CD8-positive, alpha-beta T cell (primary cell): ENCODE measurements at regions of chr16 and their contacts with region 1.

Region 1: GRCh38 chr16:87765776-87766484 is at the start of gene KLHDC4:
- DNase-seq: peak; percentile 78 to 94 (median 89)
- ATAC-seq: peak; percentile 43
- H3K4me3 ChIP-seq: peak within 1 kb of the TSS; percentile 86 to 89
- H3K4me3 Mint-ChIP-seq: peak within 1 kb of the TSS; percentile 98
- H3K27ac ChIP-seq: peak within 1 kb of the TSS; percentile 88 to 95
- H3K27ac Mint-ChIP-seq: peak within 1 kb of the TSS; percentile 99
- H3K4me1 ChIP-seq: peaks cover 45% of the 10 kb centered on the region
- H3K4me1 Mint-ChIP-seq: peaks cover 42% of the 10 kb centered on the region
- H3K27me3 ChIP-seq: no peaks in the 10 kb centered on the region
- H3K27me3 Mint-ChIP-seq: no peaks in the 10 kb centered on the region
- CTCF ChIP-seq: no peak
- total RNA-seq, gene KLHDC4: 74.0 to 81.6 TPM

Region 2: GRCh38 chr16:86554917-86555703 is 1210.8 kb before region 1 on chr16 and contains the start of gene MTHFSD:
- CTCF ChIA-PET with region 1: no interaction called
- POLR2A ChIA-PET with region 1: no interaction called
- intact Hi-C with region 1: loop called (anchors 2 to 5 kb)
- DNase-seq: peak; percentile 92 to 99 (median 96)
- ATAC-seq: peak; percentile 94
- H3K4me3 ChIP-seq: peak within 1 kb of the TSS; percentile 87 to 98
- H3K4me3 Mint-ChIP-seq: peak within 1 kb of the TSS; percentile 93
- H3K27ac ChIP-seq: peak within 1 kb of the TSS; percentile 93 to 96
- H3K27ac Mint-ChIP-seq: peak within 1 kb of the TSS; percentile 96
- H3K4me1 ChIP-seq: peaks cover 16% of the 10 kb centered on the region
- H3K4me1 Mint-ChIP-seq: peaks cover 27% of the 10 kb centered on the region
- H3K27me3 ChIP-seq: no peaks in the 10 kb centered on the region
- H3K27me3 Mint-ChIP-seq: peaks cover 9% of the 10 kb centered on the region
- CTCF ChIP-seq: no peak
- total RNA-seq, gene MTHFSD: 6.2 to 7.8 TPM

Region 3: GRCh38 chr16:87233926-87234325 is 532.0 kb before region 1 on chr16:
- CTCF ChIA-PET with region 1: no interaction called
- POLR2A ChIA-PET with region 1: no interaction called
- intact Hi-C with region 1: no loop called
- DNase-seq: no peak
- ATAC-seq: no peak
- H3K4me3 ChIP-seq: no peak overlapping the region
- H3K4me3 Mint-ChIP-seq: no peak overlapping the region
- H3K27ac ChIP-seq: no peak overlapping the region
- H3K27ac Mint-ChIP-seq: no peak overlapping the region
- H3K4me1 ChIP-seq: peaks cover 10% of the 10 kb centered on the region
- H3K4me1 Mint-ChIP-seq: peaks cover 10% of the 10 kb centered on the region
- H3K27me3 ChIP-seq: peaks cover 0 to 3% of the 10 kb centered on the region in 2 experiments
- H3K27me3 Mint-ChIP-seq: peaks cover 15% of the 10 kb centered on the region
- CTCF ChIP-seq: no peak

Region 4: DNA sequence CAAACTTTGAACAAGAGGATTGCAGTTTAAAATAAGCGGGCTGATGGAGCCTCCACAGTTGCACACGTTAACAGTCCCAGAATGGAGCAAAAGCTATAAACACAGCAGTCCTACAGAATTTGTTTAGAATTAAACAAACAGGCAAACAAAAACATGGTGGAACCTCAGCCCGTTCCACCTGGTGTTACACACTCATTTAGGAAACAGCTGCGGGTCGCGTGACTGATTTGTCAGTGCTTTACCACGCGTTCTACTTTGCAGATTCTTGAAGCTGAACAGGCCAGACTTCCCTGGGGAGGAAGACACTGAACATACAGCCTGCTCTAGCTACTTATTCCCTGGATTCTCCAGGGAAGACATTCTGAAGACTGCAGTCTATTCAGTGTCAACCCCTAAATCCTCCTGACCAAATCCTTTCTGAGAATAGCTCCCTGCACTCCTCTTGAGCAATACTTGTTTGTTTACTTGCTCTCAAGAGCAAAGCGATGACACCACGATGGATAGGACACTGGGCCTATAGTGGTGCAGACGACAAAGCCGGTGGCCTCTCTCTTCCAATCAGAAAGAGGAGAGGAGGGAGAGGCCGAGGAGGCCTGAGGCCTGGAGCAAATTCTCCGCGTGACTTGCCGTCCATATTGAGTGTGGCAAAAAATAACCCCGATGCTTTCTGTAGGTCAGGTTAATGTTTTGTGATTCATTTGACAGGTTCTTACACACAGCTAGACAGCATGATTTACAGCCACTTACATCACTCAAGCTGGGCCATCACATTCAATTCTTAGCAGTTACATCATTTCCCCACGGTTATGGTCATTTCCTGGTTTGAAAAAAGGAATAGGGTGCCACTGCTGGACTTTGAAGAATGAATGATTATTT is 377.8 kb before region 1 on chr16:
- CTCF ChIA-PET with region 1: interaction called, 3 read pairs
- POLR2A ChIA-PET with region 1: interaction called, 4 read pairs
- intact Hi-C with region 1: loop called (anchors 2 to 5 kb)
- DNase-seq: peak; percentile 76 to 97 (median 86)
- ATAC-seq: peak; percentile 65
- H3K4me3 ChIP-seq: peak overlapping the region; percentile 4 to 13
- H3K4me3 Mint-ChIP-seq: peak overlapping the region; percentile 30
- H3K27ac ChIP-seq: peak overlapping the region; percentile 53 to 89
- H3K27ac Mint-ChIP-seq: peak overlapping the region; percentile 97
- H3K4me1 ChIP-seq: peaks cover 22% of the 10 kb centered on the region
- H3K4me1 Mint-ChIP-seq: peaks cover 38% of the 10 kb centered on the region
- H3K27me3 ChIP-seq: no peaks in the 10 kb centered on the region
- H3K27me3 Mint-ChIP-seq: no peaks in the 10 kb centered on the region
- CTCF ChIP-seq: no peak

Region 5: DNA sequence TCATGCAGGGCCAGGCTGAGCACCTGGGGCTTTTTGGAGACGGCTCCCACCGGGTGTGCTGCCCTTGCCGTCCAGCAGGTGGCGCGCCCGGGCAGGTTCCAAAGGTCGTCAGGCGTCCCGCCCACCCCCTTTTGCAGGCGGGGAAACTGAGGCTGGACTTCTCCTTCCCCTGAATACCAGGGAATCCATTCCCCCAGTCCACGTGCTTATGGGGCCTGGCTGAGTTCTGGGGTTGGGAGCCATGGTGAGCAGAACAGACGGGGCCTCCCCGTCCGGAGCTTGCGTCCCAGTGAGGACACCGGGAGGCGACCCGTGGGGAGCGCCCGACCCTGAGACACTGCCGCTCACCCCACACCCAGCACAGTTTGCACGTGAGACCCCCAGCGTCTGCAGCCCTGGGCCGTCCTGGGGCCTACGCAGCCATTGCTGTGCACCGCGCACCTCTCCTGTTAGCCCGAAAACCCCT is 215.4 kb before region 1 on chr16:
- CTCF ChIA-PET with region 1: interaction called, 12 read pairs
- POLR2A ChIA-PET with region 1: no interaction called
- intact Hi-C with region 1: loop called in 1 of 2 experiments (anchors 1 kb)
- DNase-seq: peak; percentile 22 to 79 (median 60)
- ATAC-seq: peak; percentile 56
- H3K4me3 ChIP-seq: no peak overlapping the region
- H3K4me3 Mint-ChIP-seq: no peak overlapping the region
- H3K27ac ChIP-seq: no peak overlapping the region
- H3K27ac Mint-ChIP-seq: no peak overlapping the region
- H3K4me1 ChIP-seq: no peaks in the 10 kb centered on the region
- H3K4me1 Mint-ChIP-seq: peaks cover 5% of the 10 kb centered on the region
- H3K27me3 ChIP-seq: no peaks in the 10 kb centered on the region
- H3K27me3 Mint-ChIP-seq: peaks cover 23% of the 10 kb centered on the region
- CTCF ChIP-seq: peak; percentile 91

Region 6: GRCh38 chr16:87713451-87714229 is 52.3 kb before region 1 on chr16:
- CTCF ChIA-PET with region 1: interaction called, 5 read pairs
- POLR2A ChIA-PET with region 1: interaction called, 3 read pairs
- intact Hi-C with region 1: loop called in 1 of 2 experiments (anchors 5 kb)
- DNase-seq: peak; percentile 36 to 82 (median 67)
- ATAC-seq: peak; percentile 91
- H3K4me3 ChIP-seq: no peak overlapping the region
- H3K4me3 Mint-ChIP-seq: peak overlapping the region; percentile 47
- H3K27ac ChIP-seq: peak overlapping the region; percentile 23 to 78
- H3K27ac Mint-ChIP-seq: peak overlapping the region; percentile 93
- H3K4me1 ChIP-seq: peaks cover 32% of the 10 kb centered on the region
- H3K4me1 Mint-ChIP-seq: peaks cover 39% of the 10 kb centered on the region
- H3K27me3 ChIP-seq: no peaks in the 10 kb centered on the region
- H3K27me3 Mint-ChIP-seq: no peaks in the 10 kb centered on the region
- CTCF ChIP-seq: no peak

Region 7: DNA sequence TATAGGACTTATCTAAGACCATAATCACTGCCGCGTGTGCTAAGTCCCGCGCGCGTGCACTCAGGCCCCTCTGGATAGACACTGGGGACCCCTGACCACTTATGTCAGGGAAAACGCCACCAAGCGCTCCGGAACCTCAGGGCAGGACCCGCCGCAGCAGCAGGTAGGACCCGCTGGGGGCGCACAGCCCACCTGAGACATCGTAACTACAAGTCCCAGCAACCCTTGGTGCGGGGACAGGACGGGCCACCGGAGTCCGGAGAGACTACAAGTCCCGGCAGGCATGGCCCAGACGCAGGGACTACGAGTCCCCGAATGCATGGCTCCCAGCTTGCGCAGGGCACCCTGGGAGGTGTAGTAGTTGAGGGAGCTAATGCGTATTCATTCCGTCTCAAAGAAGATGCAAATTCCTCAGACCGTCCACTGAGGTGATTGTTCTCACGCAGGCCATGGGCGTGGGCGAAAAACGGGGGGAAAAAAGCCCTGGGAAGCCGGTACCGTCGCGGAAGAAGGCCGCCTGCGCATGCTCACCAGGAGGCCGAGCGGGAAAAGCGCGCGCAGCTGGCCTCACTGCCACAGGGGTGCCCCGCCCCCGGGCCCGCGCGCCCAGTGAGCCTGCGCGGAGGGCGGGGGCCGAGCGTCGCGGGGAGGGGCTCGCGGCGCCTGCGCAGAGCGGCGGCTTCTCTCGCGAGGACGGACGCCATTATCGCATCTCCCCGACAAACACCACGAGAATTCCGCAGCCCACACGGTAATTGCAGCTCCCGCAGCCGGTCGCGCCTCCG is 185.0 kb after region 1 on chr16 and contains the start of gene BANP:
- CTCF ChIA-PET with region 1: no interaction called
- POLR2A ChIA-PET with region 1: interaction called, 3 read pairs
- intact Hi-C with region 1: loop called in 1 of 2 experiments (anchors 1 kb)
- DNase-seq: peak; percentile 92 to 100 (median 96)
- ATAC-seq: peak; percentile 93
- H3K4me3 ChIP-seq: peak within 1 kb of the TSS; percentile 72 to 98
- H3K4me3 Mint-ChIP-seq: peak within 1 kb of the TSS; percentile 97
- H3K27ac ChIP-seq: peak within 1 kb of the TSS; percentile 88 to 96
- H3K27ac Mint-ChIP-seq: peak within 1 kb of the TSS; percentile 99
- H3K4me1 ChIP-seq: peaks cover 37% of the 10 kb centered on the region
- H3K4me1 Mint-ChIP-seq: peaks cover 42% of the 10 kb centered on the region
- H3K27me3 ChIP-seq: no peaks in the 10 kb centered on the region
- H3K27me3 Mint-ChIP-seq: no peaks in the 10 kb centered on the region
- CTCF ChIP-seq: peak; percentile 41
- total RNA-seq, gene BANP: 55.3 to 60.6 TPM

Region 8: GRCh38 chr16:88856828-88857733 is 1091.2 kb after region 1 on chr16 and contains the starts of genes GALNS and TRAPPC2L:
- CTCF ChIA-PET with region 1: no interaction called
- POLR2A ChIA-PET with region 1: no interaction called
- intact Hi-C with region 1: loop called in 1 of 2 experiments (anchors 5 kb)
- DNase-seq: peak; percentile 97 to 100 (median 99)
- ATAC-seq: peak; percentile 88
- H3K4me3 ChIP-seq: peak within 1 kb of the TSS; percentile 91 to 97
- H3K4me3 Mint-ChIP-seq: peak within 1 kb of the TSS; percentile 98
- H3K27ac ChIP-seq: peak within 1 kb of the TSS; percentile 74 to 83
- H3K27ac Mint-ChIP-seq: peak within 1 kb of the TSS; percentile 92
- H3K4me1 ChIP-seq: peaks cover 33% of the 10 kb centered on the region
- H3K4me1 Mint-ChIP-seq: peaks cover 39% of the 10 kb centered on the region
- H3K27me3 ChIP-seq: no peaks in the 10 kb centered on the region
- H3K27me3 Mint-ChIP-seq: no peaks in the 10 kb centered on the region
- CTCF ChIP-seq: no peak
- total RNA-seq, gene GALNS: 16.0 to 20.0 TPM
- total RNA-seq, gene TRAPPC2L: 53.4 to 56.5 TPM

Region 9: DNA sequence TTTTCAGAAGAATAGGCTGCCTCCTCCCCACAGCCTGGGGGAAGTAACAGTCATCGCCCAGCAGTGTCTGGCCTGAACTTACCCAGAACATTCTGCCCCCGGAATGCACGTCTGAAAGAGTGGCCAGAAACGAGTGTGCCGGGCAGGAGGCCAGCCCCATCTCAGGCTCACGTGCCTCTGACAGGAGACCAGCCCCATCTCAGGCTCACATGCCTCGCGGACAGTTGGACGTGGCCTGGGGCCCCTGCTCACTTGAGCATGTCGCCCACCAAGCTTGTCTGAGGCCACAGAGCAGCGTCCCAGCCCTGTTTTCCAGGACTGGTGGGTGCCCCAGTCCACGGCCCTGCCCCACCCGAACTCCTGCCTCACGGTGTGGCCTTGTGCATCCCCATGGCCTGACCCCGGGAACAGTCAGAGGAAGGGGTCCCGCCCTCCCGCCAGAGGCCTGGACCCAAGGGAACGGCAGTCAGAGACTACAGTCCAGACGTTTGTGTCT is 1389.3 kb after region 1 on chr16:
- CTCF ChIA-PET with region 1: no interaction called
- POLR2A ChIA-PET with region 1: no interaction called
- intact Hi-C with region 1: no loop called
- DNase-seq: no peak
- ATAC-seq: no peak
- H3K4me3 ChIP-seq: no peak overlapping the region
- H3K4me3 Mint-ChIP-seq: no peak overlapping the region
- H3K27ac ChIP-seq: no peak overlapping the region
- H3K27ac Mint-ChIP-seq: no peak overlapping the region
- H3K4me1 ChIP-seq: no peaks in the 10 kb centered on the region
- H3K4me1 Mint-ChIP-seq: no peaks in the 10 kb centered on the region
- H3K27me3 ChIP-seq: no peaks in the 10 kb centered on the region
- H3K27me3 Mint-ChIP-seq: no peaks in the 10 kb centered on the region
- CTCF ChIP-seq: no peak